Activated CD4-positive, alpha-beta T cell treated with anti-CD3 and anti-CD28 coated beads, Interleukin-2, amount 10 ng/mL, durations not matched to agents 7 days and 5 days (primary cell): ENCODE measurements at regions of chr2 and their contacts with region 1.

Region 1: GRCh38 chr2:85826990-85827878 is 61.6 kb downstream of the ST3GAL5 start:
- DNase-seq: peak; percentile 83
- H3K4me3 Mint-ChIP-seq: no peak overlapping the region
- H3K27ac Mint-ChIP-seq: peak overlapping the region; percentile 72
- H3K4me1 Mint-ChIP-seq: peaks cover 31% of the 10 kb centered on the region
- H3K27me3 Mint-ChIP-seq: peaks cover 24% of the 10 kb centered on the region

Region 2: GRCh38 chr2:85852937-85853498 is 25.8 kb after region 1 on chr2:
- CTCF ChIA-PET with region 1: interaction called, 14 read pairs
- POLR2A ChIA-PET with region 1: no interaction called
- DNase-seq: peak; percentile 71
- H3K4me3 Mint-ChIP-seq: peak overlapping the region; percentile 74
- H3K27ac Mint-ChIP-seq: peak overlapping the region; percentile 100
- H3K4me1 Mint-ChIP-seq: peaks cover 65% of the 10 kb centered on the region
- H3K27me3 Mint-ChIP-seq: no peaks in the 10 kb centered on the region

Region 3: GRCh38 chr2:86068136-86068588 is 240.9 kb after region 1 on chr2:
- CTCF ChIA-PET with region 1: interaction called, 11 read pairs
- POLR2A ChIA-PET with region 1: no interaction called
- DNase-seq: peak; percentile 56
- H3K4me3 Mint-ChIP-seq: no peak overlapping the region
- H3K27ac Mint-ChIP-seq: peak overlapping the region; percentile 54
- H3K4me1 Mint-ChIP-seq: peaks cover 32% of the 10 kb centered on the region
- H3K27me3 Mint-ChIP-seq: no peaks in the 10 kb centered on the region

Region 4: DNA sequence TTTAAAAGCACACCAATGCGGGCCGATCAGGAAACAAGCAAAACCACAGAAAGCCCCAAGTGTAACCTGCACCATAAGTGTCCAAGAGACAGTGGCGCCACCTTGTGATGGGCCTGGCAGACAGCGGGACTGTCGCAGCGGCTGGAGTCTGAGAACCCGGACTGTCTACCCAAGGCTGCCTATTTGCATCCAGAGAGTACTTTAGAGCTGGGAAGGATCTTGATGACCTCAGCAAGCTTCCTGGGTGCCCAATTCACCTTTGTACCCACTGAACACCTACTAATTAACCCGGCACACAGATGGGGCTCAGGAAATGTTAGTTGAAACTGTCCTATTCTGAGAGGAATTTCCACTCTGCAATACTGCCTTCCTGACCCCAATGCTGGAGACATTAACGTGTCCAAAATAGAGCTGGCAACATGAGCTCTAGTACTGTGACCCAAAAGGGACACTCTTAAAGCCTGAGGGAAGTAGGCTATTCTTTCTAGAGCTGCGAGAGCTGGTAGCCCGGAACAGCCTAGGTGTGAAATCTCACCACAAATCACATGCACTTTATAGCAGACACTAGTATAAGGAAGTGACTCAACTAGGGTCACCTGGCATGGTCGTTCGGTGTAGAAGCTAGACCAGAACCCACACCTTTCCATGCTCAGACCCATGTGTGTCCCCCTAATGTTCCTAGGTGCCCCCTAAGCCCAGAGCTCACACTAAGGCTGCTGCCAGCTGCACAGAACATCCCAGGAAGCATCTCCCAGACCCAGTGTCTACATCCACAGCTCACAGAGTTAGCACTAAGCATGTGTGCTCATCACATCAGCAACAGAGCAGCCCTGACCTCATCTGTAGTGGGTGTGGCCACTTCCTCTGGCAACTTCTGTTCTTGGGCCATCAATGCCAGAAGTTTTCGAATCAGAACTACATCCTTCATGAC is 253.0 kb after region 1 on chr2:
- CTCF ChIA-PET with region 1: interaction called, 194 read pairs
- POLR2A ChIA-PET with region 1: no interaction called
- DNase-seq: peak; percentile 91
- H3K4me3 Mint-ChIP-seq: no peak overlapping the region
- H3K27ac Mint-ChIP-seq: peak overlapping the region; percentile 81
- H3K4me1 Mint-ChIP-seq: peaks cover 40% of the 10 kb centered on the region
- H3K27me3 Mint-ChIP-seq: no peaks in the 10 kb centered on the region